ENCODE measurements at regions of chr10 and their contacts with region 1.

Region 1: DNA sequence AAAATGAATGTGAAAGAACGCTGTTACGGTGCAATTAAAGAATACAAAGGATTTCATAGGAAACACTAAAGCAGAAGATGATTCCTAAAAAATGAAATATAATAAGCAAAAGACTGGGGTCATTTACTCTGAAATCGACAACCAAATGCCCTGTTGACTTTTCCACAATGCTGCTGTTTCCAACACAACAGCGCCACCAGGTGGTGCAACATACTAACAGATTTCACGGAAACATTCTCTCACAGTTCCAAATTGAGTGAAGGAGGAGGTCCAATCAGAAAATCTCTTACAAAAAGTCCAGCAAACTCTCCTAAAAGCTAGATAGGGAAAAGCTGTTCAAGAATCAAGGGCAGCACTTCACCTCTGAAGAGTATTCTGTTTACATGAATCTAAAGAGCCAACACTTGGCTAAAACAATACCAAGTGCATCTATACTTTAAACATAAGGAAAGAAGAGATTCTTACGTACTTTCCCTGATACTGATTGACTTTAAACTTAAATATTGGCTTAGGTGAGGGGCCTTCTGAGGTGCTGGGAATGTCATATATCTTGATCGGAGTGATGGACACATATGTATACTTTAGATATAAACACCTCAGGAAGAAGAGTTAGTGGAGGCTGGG is 55.9 kb downstream of the UPF2 start:
- DNase-seq: peak; percentile 84
- H3K4me3 ChIP-seq: no peak overlapping the region
- H3K27ac ChIP-seq: peak overlapping the region in 3 of 4 donors; percentile 3 to 43 (median 36)
- H3K4me1 ChIP-seq: peaks cover 0 to 16% (median 2%) of the 10 kb centered on the region in 4 donors
- H3K27me3 ChIP-seq: no peaks in the 10 kb centered on the region
- CTCF ChIP-seq: peak; percentile 83 to 89 (median 85)
- EP300 ChIP-seq: no peak
- POLR2A ChIP-seq: no peak

Region 2: GRCh38 chr10:11782793-11783557 is 203.7 kb before region 1 on chr10:
- in situ Hi-C with region 1: loop called in 3 of 4 experiments (anchors 5 to 25 kb)
- intact Hi-C with region 1: no loop called
- DNase-seq: no peak
- H3K4me3 ChIP-seq: no peak overlapping the region
- H3K27ac ChIP-seq: no peak overlapping the region
- H3K4me1 ChIP-seq: no peaks in the 10 kb centered on the region
- H3K27me3 ChIP-seq: no peaks in the 10 kb centered on the region
- CTCF ChIP-seq: peak; percentile 63 to 75 (median 69)
- EP300 ChIP-seq: no peak
- POLR2A ChIP-seq: no peak

Region 3: DNA sequence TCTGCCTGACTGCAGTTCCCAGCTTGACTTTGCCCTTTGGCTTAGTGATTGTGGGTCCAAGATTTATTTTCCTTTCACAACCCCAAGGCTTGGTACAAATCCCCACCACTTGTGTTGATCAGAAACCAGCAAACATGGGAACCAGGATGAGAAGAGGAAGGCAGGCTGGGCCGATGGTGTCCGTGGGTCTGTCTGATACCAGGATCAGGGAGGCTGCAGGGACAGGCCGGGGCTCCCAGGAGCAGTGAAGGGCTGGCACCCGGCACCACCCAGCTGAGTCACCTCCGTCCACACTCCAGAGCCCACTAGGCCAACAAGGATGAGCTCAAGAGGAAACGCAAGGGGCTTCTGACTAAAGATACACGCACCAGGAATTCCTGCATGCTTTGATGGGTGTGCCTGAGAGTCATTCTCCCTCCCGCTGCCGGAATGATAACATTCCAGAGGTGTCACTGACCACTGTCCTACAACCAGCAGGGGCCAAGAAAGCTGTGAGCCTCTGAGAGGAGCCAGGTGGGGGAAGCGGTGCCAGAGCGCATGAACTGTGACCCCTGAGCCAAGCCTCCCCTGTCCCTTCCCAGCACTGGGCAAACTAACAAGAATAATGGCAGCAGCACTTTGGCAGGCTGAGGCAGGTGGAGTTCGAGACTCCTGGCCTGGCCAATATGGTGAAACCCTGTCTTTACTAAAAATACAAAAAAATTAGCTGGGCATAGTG is 192.8 kb before region 1 on chr10:
- in situ Hi-C with region 1: loop called in 3 of 4 experiments (anchors 5 to 25 kb)
- intact Hi-C with region 1: no loop called
- DNase-seq: no peak
- H3K4me3 ChIP-seq: no peak overlapping the region
- H3K27ac ChIP-seq: no peak overlapping the region
- H3K4me1 ChIP-seq: no peaks in the 10 kb centered on the region
- H3K27me3 ChIP-seq: no peaks in the 10 kb centered on the region
- CTCF ChIP-seq: no peak
- EP300 ChIP-seq: no peak
- POLR2A ChIP-seq: no peak

Region 4: DNA sequence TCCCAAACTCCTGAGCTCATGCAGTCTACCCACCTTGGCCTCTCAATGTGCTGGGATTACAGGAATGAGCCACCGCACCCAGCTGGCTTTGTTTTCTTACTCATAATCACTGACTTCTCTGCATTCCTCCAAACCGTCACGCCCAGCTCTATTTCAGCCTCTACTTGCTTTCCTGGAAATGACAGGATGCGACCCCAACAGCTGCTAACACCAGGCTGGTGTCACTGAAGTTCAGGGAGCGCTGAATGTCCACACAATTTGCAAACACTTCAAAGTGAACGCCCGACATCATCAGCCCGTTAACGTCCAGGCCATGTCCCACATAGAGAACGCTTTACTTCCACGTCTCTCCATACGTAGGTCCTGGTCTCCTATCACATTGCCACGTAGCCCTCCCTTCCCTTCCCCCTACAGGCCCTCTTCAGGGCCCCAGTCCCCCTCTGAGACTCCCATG is 176.4 kb before region 1 on chr10:
- in situ Hi-C with region 1: no loop called
- intact Hi-C with region 1: no loop called
- DNase-seq: no peak
- H3K4me3 ChIP-seq: no peak overlapping the region
- H3K27ac ChIP-seq: no peak overlapping the region
- H3K4me1 ChIP-seq: no peaks in the 10 kb centered on the region
- H3K27me3 ChIP-seq: no peaks in the 10 kb centered on the region
- CTCF ChIP-seq: no peak
- EP300 ChIP-seq: no peak
- POLR2A ChIP-seq: no peak

Measured in transverse colon (tissue), 4 donors.